CD4-positive, alpha-beta memory T cell (primary cell): ENCODE measurements at regions of chr2 and their contacts with region 1.

Region 1: DNA sequence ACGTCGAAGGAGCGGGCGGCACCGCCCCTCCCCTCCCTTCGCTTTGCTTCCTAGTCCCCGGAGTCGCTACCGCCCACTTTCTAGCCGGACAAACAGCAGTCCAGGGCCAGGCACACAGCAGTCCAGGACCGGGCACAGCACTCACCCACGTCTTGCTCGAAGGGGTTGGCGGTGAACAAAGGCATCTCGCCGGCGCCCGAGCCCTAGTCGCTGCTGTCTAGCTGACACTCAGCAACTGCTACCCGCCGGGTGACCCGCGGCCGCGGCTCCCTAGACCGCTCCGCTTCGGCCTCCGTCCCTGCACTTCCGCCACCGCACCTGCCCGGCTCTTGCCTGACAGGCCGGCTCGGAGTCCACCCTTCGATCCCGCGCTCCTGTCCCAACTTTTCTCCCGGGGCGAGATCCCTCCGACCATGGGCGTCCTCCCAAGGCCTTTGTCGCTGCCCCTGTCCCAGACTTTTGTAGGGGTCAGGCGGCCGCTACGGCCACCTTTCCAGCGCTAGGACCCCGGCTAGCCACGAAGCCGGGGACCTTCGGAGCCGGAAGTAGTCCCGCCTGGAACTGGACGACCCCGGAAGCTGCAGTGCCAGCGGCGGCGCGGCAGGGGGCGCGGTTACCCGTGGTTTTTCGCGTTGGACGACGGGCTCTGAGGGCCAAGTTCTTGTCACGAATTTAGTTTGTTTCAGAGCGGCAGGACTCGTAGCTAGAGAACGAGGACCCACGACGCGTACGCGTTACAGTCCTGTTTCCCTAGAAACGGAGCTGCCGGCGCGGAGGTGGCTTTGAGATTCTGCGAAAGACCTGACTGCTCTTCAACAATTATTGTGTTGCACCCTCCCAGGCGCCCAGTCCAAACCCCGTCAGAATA is at the start of gene STAM2:
- DNase-seq: peak; percentile 85 to 93 (median 91)
- H3K4me3 ChIP-seq: peak within 1 kb of the TSS; percentile 74 to 99
- H3K4me3 Mint-ChIP-seq: peak within 1 kb of the TSS; percentile 95 to 99 (median 98)
- H3K27ac ChIP-seq: peak within 1 kb of the TSS; percentile 91
- H3K27ac Mint-ChIP-seq: peak within 1 kb of the TSS; percentile 98 to 100 (median 99)
- H3K4me1 ChIP-seq: peaks cover 36% of the 10 kb centered on the region
- H3K4me1 Mint-ChIP-seq: peaks cover 25 to 49% (median 32%) of the 10 kb centered on the region in 4 donors
- H3K27me3 ChIP-seq: no peaks in the 10 kb centered on the region
- H3K27me3 Mint-ChIP-seq: peaks cover 0 to 2% of the 10 kb centered on the region in 2 donors
- total RNA-seq, gene STAM2: 20.9 to 25.3 TPM

Region 2: GRCh38 chr2:152036611-152037469 is 138.9 kb before region 1 on chr2:
- CTCF ChIA-PET with region 1: no interaction called
- POLR2A ChIA-PET with region 1: no interaction called
- intact Hi-C with region 1: loop called (anchors 2 kb)
- DNase-seq: peak in 4 of 5 donors; percentile 34 to 39 (median 37)
- H3K4me3 ChIP-seq: no peak overlapping the region
- H3K4me3 Mint-ChIP-seq: no peak overlapping the region
- H3K27ac ChIP-seq: no peak overlapping the region
- H3K27ac Mint-ChIP-seq: no peak overlapping the region
- H3K4me1 ChIP-seq: no peaks in the 10 kb centered on the region
- H3K4me1 Mint-ChIP-seq: no peaks in the 10 kb centered on the region
- H3K27me3 ChIP-seq: no peaks in the 10 kb centered on the region
- H3K27me3 Mint-ChIP-seq: peaks cover 0 to 2% of the 10 kb centered on the region in 2 donors

Region 3: GRCh38 chr2:152200562-152201465 is 25.1 kb after region 1 on chr2:
- CTCF ChIA-PET with region 1: no interaction called
- POLR2A ChIA-PET with region 1: no interaction called
- intact Hi-C with region 1: no loop called
- DNase-seq: no peak
- H3K4me3 ChIP-seq: no peak overlapping the region
- H3K4me3 Mint-ChIP-seq: no peak overlapping the region
- H3K27ac ChIP-seq: no peak overlapping the region
- H3K27ac Mint-ChIP-seq: no peak overlapping the region
- H3K4me1 ChIP-seq: no peaks in the 10 kb centered on the region
- H3K4me1 Mint-ChIP-seq: no peaks in the 10 kb centered on the region
- H3K27me3 ChIP-seq: no peaks in the 10 kb centered on the region
- H3K27me3 Mint-ChIP-seq: peaks cover 12 to 15% of the 10 kb centered on the region in 2 donors

Region 4: DNA sequence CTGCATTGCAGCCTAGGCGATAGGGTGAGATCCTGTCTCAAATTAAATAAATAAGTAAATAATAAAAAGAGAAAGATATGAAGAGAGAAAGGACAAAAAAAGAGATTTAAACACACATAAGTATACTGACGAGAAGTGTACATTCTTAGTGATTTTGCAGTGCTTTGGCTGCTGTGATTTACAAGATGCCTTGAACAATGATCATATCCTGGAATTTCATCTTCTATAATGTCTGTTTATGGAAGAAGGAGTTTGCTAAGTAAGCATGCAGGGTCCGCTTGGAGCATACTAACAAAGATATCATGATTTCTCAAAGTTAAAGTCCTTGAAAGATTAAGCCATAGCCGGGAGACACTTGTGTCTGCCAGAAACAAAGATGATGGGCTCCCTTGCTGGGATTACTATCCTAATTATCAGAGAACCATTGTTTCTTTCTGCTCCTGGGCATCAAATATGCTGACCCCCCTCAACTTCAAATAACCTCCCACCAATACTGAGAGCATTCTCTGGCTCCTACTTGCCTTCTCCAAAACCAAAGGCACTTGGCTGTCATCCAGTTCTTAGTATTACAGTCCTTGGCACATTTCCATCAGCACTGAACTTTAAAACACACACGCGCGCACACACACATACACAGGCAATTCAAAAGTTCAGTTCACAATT is 47.4 kb after region 1 on chr2:
- CTCF ChIA-PET with region 1: no interaction called
- POLR2A ChIA-PET with region 1: no interaction called
- intact Hi-C with region 1: no loop called
- DNase-seq: no peak
- H3K4me3 ChIP-seq: no peak overlapping the region
- H3K4me3 Mint-ChIP-seq: no peak overlapping the region
- H3K27ac ChIP-seq: no peak overlapping the region
- H3K27ac Mint-ChIP-seq: no peak overlapping the region
- H3K4me1 ChIP-seq: no peaks in the 10 kb centered on the region
- H3K4me1 Mint-ChIP-seq: no peaks in the 10 kb centered on the region
- H3K27me3 ChIP-seq: no peaks in the 10 kb centered on the region
- H3K27me3 Mint-ChIP-seq: peaks cover 9 to 12% of the 10 kb centered on the region in 2 donors

Region 5: DNA sequence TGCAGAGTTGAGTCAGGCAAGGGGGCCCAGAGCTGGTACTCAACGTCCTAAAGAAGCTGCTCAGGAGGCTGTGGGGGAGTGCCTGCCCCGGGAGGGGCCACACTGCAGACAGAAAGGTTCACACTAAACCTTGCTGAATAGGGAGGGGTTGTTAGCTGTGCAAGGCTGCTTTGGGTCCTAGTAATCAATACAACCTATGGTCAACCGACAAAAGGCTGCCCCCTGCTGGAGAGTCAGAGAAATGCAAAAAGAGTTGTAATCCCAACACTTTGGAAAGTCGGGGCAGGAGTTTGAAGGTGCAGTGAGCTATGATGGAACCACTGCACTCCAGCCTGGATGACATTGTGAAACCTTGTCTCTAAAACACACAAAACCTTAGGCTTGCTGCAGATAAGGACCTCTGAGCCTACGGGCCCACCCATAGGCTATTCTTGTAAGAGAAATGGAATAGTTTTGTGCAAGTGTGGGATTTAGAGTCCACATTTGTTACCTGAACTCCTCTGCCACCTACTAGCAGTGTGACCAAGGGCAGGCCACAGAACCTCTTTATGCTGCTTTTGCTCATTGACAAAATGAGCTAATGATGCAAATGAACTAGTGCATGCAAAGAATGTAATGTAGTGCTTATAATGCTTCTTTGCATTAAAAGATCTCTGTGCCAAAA is 460.1 kb after region 1 on chr2:
- CTCF ChIA-PET with region 1: interaction called, 115 read pairs
- POLR2A ChIA-PET with region 1: interaction called, 14 read pairs
- intact Hi-C with region 1: loop called (anchors 1 kb)
- DNase-seq: peak; percentile 48 to 61 (median 55)
- H3K4me3 ChIP-seq: no peak overlapping the region
- H3K4me3 Mint-ChIP-seq: no peak overlapping the region
- H3K27ac ChIP-seq: no peak overlapping the region
- H3K27ac Mint-ChIP-seq: no peak overlapping the region
- H3K4me1 ChIP-seq: no peaks in the 10 kb centered on the region
- H3K4me1 Mint-ChIP-seq: peaks cover 0 to 3% (median 0%) of the 10 kb centered on the region in 4 donors
- H3K27me3 ChIP-seq: no peaks in the 10 kb centered on the region
- H3K27me3 Mint-ChIP-seq: peaks cover 3 to 6% of the 10 kb centered on the region in 2 donors

Region 6: DNA sequence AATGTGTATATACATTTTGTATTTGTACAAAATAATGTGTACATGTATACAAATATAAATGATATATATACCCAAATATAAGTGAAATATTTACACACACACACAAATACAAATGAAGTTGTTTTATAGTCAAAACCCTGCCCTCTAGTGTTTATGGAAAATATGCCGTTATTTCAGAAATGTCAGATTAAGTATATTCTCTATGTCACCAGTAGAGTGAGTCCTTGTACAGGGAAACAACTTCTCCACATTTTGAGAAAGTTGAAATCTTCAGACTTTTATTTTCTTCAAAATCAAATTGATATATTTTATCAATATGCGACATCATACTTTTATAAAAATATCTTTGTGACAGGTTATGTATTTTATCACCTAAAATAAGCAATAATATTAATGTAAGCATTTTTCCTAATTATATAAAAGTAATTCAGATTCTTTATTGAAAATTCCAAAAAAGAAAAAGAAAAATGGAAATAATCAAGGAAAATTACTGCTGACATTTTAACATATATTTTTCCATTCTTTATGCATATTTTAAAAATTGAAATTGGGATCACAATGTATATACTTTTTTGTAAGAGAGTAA is 565.1 kb after region 1 on chr2:
- CTCF ChIA-PET with region 1: interaction called, 4 read pairs
- POLR2A ChIA-PET with region 1: no interaction called
- intact Hi-C with region 1: loop called (anchors 1 kb)
- DNase-seq: peak in 4 of 5 donors; percentile 43 to 52 (median 50)
- H3K4me3 ChIP-seq: no peak overlapping the region
- H3K4me3 Mint-ChIP-seq: no peak overlapping the region
- H3K27ac ChIP-seq: no peak overlapping the region
- H3K27ac Mint-ChIP-seq: no peak overlapping the region
- H3K4me1 ChIP-seq: no peaks in the 10 kb centered on the region
- H3K4me1 Mint-ChIP-seq: peaks cover 3 to 11% (median 6%) of the 10 kb centered on the region in 4 donors
- H3K27me3 ChIP-seq: no peaks in the 10 kb centered on the region
- H3K27me3 Mint-ChIP-seq: no peaks in the 10 kb centered on the region

Region 7: GRCh38 chr2:153519257-153519875 is 1343.7 kb after region 1 on chr2:
- CTCF ChIA-PET with region 1: interaction called, 5 read pairs
- POLR2A ChIA-PET with region 1: no interaction called
- intact Hi-C with region 1: loop called (anchors 2 kb)
- DNase-seq: peak in 4 of 5 donors; percentile 21 to 35 (median 23)
- H3K4me3 ChIP-seq: no peak overlapping the region
- H3K4me3 Mint-ChIP-seq: no peak overlapping the region
- H3K27ac ChIP-seq: no peak overlapping the region
- H3K27ac Mint-ChIP-seq: no peak overlapping the region
- H3K4me1 ChIP-seq: no peaks in the 10 kb centered on the region
- H3K4me1 Mint-ChIP-seq: no peaks in the 10 kb centered on the region
- H3K27me3 ChIP-seq: no peaks in the 10 kb centered on the region
- H3K27me3 Mint-ChIP-seq: peaks cover 2 to 4% of the 10 kb centered on the region in 2 donors